ENCODE measurements at regions of chr6 and their contacts with region 1.

Region 1: GRCh38 chr6:136643850-136644596 is 93.8 kb upstream of the MAP7 start:
- DNase-seq: peak; percentile 85
- ATAC-seq: peak; percentile 57
- H3K4me3 Mint-ChIP-seq: no peak overlapping the region
- H3K27ac Mint-ChIP-seq: no peak overlapping the region
- H3K4me1 Mint-ChIP-seq: peaks cover 6% of the 10 kb centered on the region
- H3K27me3 Mint-ChIP-seq: no peaks in the 10 kb centered on the region

Region 2: GRCh38 chr6:136607932-136608772 is 35.9 kb before region 1 on chr6:
- CTCF ChIA-PET with region 1: interaction called, 10 read pairs
- DNase-seq: peak; percentile 86
- ATAC-seq: peak; percentile 96
- H3K4me3 Mint-ChIP-seq: no peak overlapping the region
- H3K27ac Mint-ChIP-seq: no peak overlapping the region
- H3K4me1 Mint-ChIP-seq: peaks cover 23% of the 10 kb centered on the region
- H3K27me3 Mint-ChIP-seq: no peaks in the 10 kb centered on the region

Region 3: DNA sequence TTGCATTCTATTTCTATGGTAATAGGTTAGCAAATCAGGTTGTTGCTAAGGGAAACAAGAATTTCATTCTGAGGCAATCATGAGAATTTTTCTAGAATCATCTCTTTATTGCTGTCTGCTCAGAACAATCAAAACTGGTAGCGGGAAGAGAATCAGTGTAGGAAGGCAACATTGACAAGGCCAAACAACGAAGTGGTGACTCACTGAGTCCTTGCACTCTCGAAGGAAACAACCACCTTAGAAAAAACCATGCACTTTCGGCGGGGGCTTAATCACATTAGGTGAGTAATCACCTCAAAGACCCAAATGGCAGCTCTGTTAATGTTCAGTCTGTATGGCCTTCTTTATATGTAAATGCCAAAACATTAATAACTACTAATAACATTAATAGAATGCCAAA is 15.0 kb before region 1 on chr6:
- CTCF ChIA-PET with region 1: interaction called, 11 read pairs
- DNase-seq: no peak
- ATAC-seq: no peak
- H3K4me3 Mint-ChIP-seq: no peak overlapping the region
- H3K27ac Mint-ChIP-seq: no peak overlapping the region
- H3K4me1 Mint-ChIP-seq: peaks cover 6% of the 10 kb centered on the region
- H3K27me3 Mint-ChIP-seq: no peaks in the 10 kb centered on the region

Region 4: GRCh38 chr6:136699358-136699757 is 55.3 kb after region 1 on chr6:
- CTCF ChIA-PET with region 1: interaction called, 10 read pairs
- DNase-seq: no peak
- ATAC-seq: no peak
- H3K4me3 Mint-ChIP-seq: no peak overlapping the region
- H3K27ac Mint-ChIP-seq: no peak overlapping the region
- H3K4me1 Mint-ChIP-seq: peaks cover 23% of the 10 kb centered on the region
- H3K27me3 Mint-ChIP-seq: no peaks in the 10 kb centered on the region

Region 5: GRCh38 chr6:136737871-136738691 is 94.1 kb after region 1 on chr6:
- CTCF ChIA-PET with region 1: interaction called, 13 read pairs
- DNase-seq: no peak
- ATAC-seq: no peak
- H3K4me3 Mint-ChIP-seq: no peak overlapping the region
- H3K27ac Mint-ChIP-seq: no peak overlapping the region
- H3K4me1 Mint-ChIP-seq: peaks cover 8% of the 10 kb centered on the region
- H3K27me3 Mint-ChIP-seq: no peaks in the 10 kb centered on the region

Region 6: GRCh38 chr6:136761227-136761922 is 117.4 kb after region 1 on chr6:
- CTCF ChIA-PET with region 1: interaction called, 42 read pairs
- DNase-seq: peak; percentile 66
- ATAC-seq: peak; percentile 72
- H3K4me3 Mint-ChIP-seq: peak overlapping the region; percentile 68
- H3K27ac Mint-ChIP-seq: peak overlapping the region; percentile 81
- H3K4me1 Mint-ChIP-seq: peaks cover 64% of the 10 kb centered on the region
- H3K27me3 Mint-ChIP-seq: no peaks in the 10 kb centered on the region

Region 7: DNA sequence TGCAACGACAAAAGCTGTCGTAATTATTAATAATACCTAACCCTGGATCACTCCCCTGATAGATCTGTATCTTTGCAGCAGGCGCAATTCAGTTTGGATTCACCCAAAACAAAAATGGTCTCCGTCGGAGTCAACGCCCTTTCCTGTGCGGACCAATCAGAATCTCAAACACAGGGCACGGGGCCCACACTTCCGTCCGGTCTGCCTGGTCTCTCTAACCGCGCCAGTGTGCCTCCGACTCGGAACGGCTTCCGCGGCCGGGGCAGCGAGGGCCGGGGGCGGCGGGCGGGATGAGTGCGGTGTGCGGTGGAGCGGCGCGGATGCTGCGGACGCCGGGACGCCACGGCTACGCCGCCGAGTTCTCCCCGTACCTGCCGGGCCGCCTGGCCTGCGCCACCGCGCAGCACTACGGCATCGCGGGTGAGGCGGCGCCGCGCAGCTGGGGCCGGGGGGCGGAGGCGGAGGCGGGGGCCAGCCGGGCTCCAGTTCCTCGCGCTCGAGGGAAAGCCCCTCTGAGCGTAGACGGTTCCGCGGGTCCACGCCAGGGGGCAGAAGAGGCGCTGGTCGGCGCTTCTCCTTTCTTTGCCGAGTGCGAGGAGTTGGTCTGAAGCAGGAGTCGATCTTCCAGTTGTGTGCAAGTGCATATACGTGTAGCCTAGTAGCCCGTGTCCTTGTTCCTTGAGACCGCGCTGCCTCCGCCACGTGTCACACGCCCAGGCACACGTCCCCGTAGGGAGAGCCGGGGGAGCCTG is 178.5 kb after region 1 on chr6 and contains the start of gene PEX7:
- CTCF ChIA-PET with region 1: interaction called, 17 read pairs
- DNase-seq: peak; percentile 94
- ATAC-seq: peak; percentile 97
- H3K4me3 Mint-ChIP-seq: peak within 1 kb of the TSS; percentile 97
- H3K27ac Mint-ChIP-seq: peak within 1 kb of the TSS; percentile 98
- H3K4me1 Mint-ChIP-seq: peaks cover 18% of the 10 kb centered on the region
- H3K27me3 Mint-ChIP-seq: peaks cover 2% of the 10 kb centered on the region
- total RNA-seq, gene PEX7: 3.5 TPM

Region 8: GRCh38 chr6:137013738-137014602 is 369.9 kb after region 1 on chr6:
- CTCF ChIA-PET with region 1: no interaction called
- DNase-seq: no peak
- ATAC-seq: no peak
- H3K4me3 Mint-ChIP-seq: no peak overlapping the region
- H3K27ac Mint-ChIP-seq: no peak overlapping the region
- H3K4me1 Mint-ChIP-seq: no peaks in the 10 kb centered on the region
- H3K27me3 Mint-ChIP-seq: peaks cover 74% of the 10 kb centered on the region

Measured in activated CD8-positive, alpha-beta memory T cell treated with anti-CD3 and anti-CD28 coated beads, Interleukin-2, amount 10 ng/mL, durations not matched to agents 7 days and 5 days (primary cell).